Activated naive CD4-positive, alpha-beta T cell treated with anti-CD3 and anti-CD28 coated beads, Interleukin-2, amount 10 ng/mL, durations not matched to agents 7 days and 5 days (primary cell): ENCODE measurements at regions of chr2 and their contacts with region 1.

Region 1: DNA sequence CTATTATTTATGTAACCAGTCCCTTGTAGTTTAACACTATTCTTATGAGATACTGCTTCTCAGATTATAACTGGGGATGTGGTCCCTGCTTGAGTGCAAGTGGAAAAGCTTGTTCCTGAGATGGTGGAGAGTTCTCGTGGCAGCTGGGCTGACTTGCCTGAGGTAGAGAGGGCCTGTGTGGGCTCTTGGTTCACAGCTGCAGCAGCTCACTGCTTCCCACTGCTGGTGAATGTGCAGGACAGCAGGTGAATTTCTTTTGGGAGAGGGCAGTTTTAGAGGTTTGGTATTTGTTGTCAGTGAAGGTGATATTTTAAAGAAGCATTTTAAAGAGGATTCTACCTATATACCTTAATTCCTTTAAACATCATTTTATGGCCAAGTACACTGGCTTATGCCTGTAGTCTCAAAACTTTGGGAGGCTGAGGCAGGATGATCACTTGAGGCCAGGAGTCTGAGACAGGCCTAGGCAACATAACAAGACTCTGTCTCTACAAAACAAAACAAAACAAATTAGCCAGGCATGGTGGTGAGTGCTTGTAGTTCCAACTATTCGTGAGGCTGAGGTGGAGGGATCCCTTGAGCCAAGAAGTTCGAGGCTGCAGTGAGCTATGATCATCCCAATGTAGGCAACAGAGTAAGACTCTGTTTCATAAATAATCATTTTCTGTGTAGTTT is 94.8 kb downstream of the MTA3 start:
- DNase-seq: peak; percentile 72
- H3K4me3 Mint-ChIP-seq: no peak overlapping the region
- H3K27ac Mint-ChIP-seq: peak overlapping the region; percentile 2
- H3K4me1 Mint-ChIP-seq: peaks cover 11% of the 10 kb centered on the region
- H3K27me3 Mint-ChIP-seq: no peaks in the 10 kb centered on the region

Region 2: DNA sequence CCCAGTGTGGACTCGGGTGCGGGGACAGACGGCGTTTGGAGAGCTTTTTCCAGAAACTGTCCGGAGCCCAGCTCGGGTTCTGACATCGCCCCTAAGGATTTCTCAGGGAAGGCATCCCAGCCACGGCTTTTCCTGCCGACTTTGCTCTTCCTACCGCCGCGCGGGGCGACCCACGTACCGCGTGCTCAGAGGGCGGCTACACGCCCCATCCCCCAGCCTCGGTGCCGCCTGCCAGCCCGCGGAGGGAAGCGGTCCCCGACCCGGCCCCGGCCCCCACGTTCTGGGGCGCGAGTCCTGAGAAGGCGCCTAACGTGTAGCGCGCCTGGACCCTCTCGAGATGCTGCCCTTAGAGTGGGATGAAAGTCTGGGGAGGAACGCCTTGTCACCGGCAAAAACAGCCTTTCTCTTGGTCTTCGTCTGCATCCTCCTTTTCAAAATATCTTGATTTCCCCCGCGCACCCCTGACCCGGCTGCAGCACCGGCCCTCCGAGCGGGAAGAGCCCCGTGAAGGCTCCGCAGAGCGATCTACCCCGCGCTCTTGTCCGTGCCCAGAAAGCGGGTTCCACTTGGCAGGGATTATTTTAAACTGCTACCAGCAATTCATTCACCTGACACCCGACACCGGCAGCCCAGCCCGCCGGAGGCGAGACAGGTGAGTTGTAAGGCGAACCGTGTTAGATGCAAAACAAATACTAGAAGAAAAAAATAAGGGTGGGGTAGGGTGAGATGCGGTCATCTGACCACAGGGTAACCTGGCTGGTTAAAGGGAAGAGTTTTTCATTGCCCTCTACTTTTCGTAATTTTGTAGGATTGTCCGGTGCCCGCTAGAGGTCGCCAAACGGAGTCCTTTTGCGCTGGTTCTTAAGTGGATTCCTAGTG is 168.6 kb before region 1 on chr2:
- CTCF ChIA-PET with region 1: interaction called, 49 read pairs
- DNase-seq: peak; percentile 84
- H3K4me3 Mint-ChIP-seq: peak overlapping the region; percentile 91
- H3K27ac Mint-ChIP-seq: peak overlapping the region; percentile 11
- H3K4me1 Mint-ChIP-seq: peaks cover 14% of the 10 kb centered on the region
- H3K27me3 Mint-ChIP-seq: peaks cover 47% of the 10 kb centered on the region

Region 3: DNA sequence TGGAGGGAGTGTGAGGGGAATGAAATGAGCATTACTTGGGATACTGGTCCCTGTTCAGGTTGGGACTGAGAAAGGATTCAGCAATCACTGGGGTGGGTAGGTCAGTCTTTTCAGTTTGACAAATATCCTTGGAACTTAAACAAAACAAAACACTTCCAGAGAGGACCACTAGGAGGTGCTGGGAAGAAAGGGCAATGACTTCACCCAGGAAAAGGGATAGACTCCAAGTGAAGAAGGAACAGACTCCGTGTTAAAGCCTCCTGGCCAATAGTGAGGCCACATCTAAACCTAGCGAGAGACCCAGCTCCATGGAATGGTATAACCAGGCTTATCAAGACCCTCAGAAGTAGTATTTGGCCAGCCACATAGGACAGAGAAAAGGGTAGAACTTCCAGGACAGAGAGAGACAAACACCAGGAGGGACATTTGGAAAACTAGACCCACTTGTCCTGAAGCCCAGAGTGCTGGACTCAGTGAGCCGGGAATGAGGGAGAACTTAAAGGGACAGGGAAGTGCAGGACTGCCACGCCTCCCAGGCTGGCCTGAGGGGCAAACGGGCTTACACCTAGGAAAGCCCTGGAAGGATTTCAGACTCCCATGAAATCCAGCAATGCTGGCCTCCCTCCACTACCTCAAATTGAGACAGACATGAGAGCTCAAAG is 149.9 kb before region 1 on chr2:
- CTCF ChIA-PET with region 1: interaction called, 30 read pairs
- DNase-seq: peak; percentile 24
- H3K4me3 Mint-ChIP-seq: no peak overlapping the region
- H3K27ac Mint-ChIP-seq: no peak overlapping the region
- H3K4me1 Mint-ChIP-seq: peaks cover 8% of the 10 kb centered on the region
- H3K27me3 Mint-ChIP-seq: no peaks in the 10 kb centered on the region

Region 4: DNA sequence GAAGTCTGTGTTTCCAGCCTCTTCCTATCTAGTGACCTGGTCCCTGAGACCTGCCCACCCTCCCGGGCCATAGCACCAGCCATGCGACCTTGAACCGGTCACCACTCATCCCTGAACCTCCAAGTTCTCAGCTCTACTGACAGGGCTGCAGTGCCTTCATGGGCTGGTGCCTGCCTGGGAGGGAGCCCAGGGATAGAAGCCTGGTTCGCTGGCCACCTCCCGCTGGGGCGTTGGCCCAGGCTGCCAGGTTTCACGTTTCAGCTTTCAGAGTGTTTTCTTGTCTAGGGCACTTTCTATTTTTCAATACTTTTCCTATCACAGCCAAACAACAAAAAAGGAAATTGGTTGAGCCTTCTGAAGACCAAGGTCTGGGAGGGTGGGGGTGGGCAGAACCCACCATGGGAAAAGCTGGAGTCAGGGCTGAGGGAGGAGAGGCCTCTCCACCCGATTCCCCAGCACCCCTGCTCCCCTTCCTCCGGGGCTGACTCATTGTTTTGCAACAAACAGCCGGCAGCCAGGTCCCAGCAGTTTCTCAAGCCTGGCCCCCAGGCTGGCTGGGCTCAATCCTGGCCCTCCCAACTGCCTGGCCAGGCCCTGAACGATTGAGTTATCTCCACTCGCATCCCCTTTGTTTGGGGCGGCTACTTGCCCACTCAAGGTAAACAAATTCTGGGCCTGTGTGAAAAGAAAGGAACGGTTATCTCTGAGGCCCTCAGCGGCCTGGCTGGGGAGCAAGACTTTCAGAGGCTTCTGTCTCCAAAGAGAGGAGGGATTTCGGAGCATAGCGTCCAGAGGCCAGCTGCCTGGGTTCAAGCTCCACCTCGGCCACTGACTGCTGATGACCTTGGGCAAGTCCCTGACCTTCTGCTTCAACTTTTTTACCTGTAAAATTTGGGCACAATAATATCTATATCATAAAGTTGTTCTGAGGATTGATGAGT is 515.6 kb after region 1 on chr2:
- CTCF ChIA-PET with region 1: no interaction called
- DNase-seq: peak; percentile 61
- H3K4me3 Mint-ChIP-seq: peak overlapping the region; percentile 28
- H3K27ac Mint-ChIP-seq: peak overlapping the region; percentile 95
- H3K4me1 Mint-ChIP-seq: peaks cover 76% of the 10 kb centered on the region
- H3K27me3 Mint-ChIP-seq: no peaks in the 10 kb centered on the region